Common myeloid progenitor, CD34-positive (primary cell): ENCODE measurements at regions of chr6 and their contacts with region 1.

Region 1: GRCh38 chr6:56699066-56699654 is 56.5 kb upstream of the DST start:
- DNase-seq: peak; percentile 30 to 59 (median 58)
- H3K4me3 ChIP-seq: no peak overlapping the region
- H3K27ac ChIP-seq: no peak overlapping the region
- H3K4me1 ChIP-seq: peaks cover 0 to 4% (median 2%) of the 10 kb centered on the region in 4 experiments
- H3K27me3 ChIP-seq: no peaks in the 10 kb centered on the region

Region 2: DNA sequence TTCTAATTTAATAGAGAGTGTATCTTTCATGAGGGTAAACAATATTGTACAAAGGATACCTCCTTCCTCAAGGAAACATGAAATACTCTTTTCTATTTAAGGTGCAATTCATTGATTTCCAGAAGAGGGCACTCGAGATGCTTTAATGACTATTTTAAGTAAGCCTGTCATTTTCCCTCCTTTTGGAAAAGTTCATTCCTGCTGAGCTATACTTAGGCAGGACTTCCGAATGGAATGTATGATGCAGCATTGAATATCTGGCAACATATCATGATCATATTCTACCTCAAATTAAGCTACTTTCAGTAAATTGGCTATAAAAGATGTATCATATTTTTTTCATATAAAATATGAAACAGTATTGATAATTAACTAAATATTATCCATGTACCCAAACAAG is 61.5 kb before region 1 on chr6:
- CTCF ChIA-PET with region 1: interaction called, 75 read pairs
- POLR2A ChIA-PET with region 1: no interaction called
- DNase-seq: peak; percentile 57 to 72 (median 57)
- H3K4me3 ChIP-seq: no peak overlapping the region
- H3K27ac ChIP-seq: no peak overlapping the region
- H3K4me1 ChIP-seq: no peaks in the 10 kb centered on the region
- H3K27me3 ChIP-seq: no peaks in the 10 kb centered on the region

Region 3: GRCh38 chr6:56649053-56649769 is 49.9 kb before region 1 on chr6:
- CTCF ChIA-PET with region 1: interaction called, 25 read pairs
- POLR2A ChIA-PET with region 1: no interaction called
- DNase-seq: peak in 2 of 3 donors; percentile 27 to 40
- H3K4me3 ChIP-seq: no peak overlapping the region
- H3K27ac ChIP-seq: no peak overlapping the region
- H3K4me1 ChIP-seq: peaks cover 0 to 21% (median 13%) of the 10 kb centered on the region in 4 experiments
- H3K27me3 ChIP-seq: no peaks in the 10 kb centered on the region

Region 4: DNA sequence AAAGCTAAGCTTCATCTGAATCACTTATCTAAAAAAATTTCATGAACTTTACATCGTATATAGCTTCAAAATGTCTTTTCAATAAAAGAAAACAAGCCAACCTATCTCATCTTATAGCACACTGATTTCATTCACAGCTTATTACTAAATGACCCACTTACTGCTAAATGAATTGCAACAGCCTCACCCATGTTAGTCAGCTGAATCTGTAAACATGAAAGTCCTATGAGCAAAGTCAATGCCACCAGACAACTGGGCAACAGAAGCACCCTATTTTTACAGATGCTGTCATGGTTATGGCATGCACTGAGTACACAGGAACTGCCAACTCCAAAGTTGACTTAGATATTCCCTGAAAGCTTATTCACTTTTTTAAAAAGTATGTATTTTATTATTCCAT is 15.3 kb before region 1 on chr6:
- CTCF ChIA-PET with region 1: interaction called, 17 read pairs
- POLR2A ChIA-PET with region 1: no interaction called
- DNase-seq: no peak
- H3K4me3 ChIP-seq: no peak overlapping the region
- H3K27ac ChIP-seq: no peak overlapping the region
- H3K4me1 ChIP-seq: no peaks in the 10 kb centered on the region
- H3K27me3 ChIP-seq: no peaks in the 10 kb centered on the region